Heart left ventricle (tissue), 16 donors: ENCODE measurements at regions of chr5 and their contacts with region 1.

Region 1: GRCh38 chr5:172697123-172698121 is 56.4 kb downstream of the NEURL1B start:
- DNase-seq: peak; percentile 91 to 94 (median 92)
- ATAC-seq: peak; percentile 63 to 78 (median 68)
- H3K4me3 ChIP-seq: peak overlapping the region; percentile 21 to 70 (median 62)
- H3K27ac ChIP-seq: peak overlapping the region; percentile 53 to 94 (median 89)
- H3K4me1 ChIP-seq: peaks cover 5 to 74% (median 65%) of the 10 kb centered on the region in 12 donors
- H3K27me3 ChIP-seq: no peaks in the 10 kb centered on the region
- CTCF ChIP-seq: peak; percentile 80 to 96 (median 92)
- POLR2A ChIP-seq: peak in 1 of 2 donors; percentile 49

Region 2: DNA sequence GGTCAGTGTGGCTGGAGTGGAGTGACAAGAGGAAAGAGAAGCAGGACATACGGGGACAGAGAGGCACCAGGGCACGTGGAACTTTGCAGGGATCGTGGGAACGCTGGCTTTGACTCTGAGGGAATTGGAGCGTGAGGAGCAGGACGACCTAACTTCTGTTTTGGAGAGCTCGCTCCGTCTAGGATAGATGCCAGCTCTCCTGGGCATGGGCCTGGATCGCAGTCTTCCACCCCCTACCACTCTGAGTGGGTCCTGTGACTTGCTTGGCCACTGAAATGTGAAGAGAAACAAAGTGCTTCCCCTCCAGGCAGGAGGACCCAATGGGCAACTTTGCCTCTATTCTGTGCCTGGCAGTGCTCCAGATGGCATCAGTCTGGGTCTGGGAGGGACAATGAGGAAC is 234.4 kb before region 1 on chr5:
- intact Hi-C with region 1: loop called in 2 of 10 experiments (anchors 5 kb)
- DNase-seq: no peak
- ATAC-seq: no peak
- H3K4me3 ChIP-seq: no peak overlapping the region
- H3K27ac ChIP-seq: no peak overlapping the region
- H3K4me1 ChIP-seq: peaks cover 0 to 35% (median 3%) of the 10 kb centered on the region in 12 donors
- H3K27me3 ChIP-seq: no peaks in the 10 kb centered on the region
- CTCF ChIP-seq: no peak
- POLR2A ChIP-seq: no peak

Region 3: DNA sequence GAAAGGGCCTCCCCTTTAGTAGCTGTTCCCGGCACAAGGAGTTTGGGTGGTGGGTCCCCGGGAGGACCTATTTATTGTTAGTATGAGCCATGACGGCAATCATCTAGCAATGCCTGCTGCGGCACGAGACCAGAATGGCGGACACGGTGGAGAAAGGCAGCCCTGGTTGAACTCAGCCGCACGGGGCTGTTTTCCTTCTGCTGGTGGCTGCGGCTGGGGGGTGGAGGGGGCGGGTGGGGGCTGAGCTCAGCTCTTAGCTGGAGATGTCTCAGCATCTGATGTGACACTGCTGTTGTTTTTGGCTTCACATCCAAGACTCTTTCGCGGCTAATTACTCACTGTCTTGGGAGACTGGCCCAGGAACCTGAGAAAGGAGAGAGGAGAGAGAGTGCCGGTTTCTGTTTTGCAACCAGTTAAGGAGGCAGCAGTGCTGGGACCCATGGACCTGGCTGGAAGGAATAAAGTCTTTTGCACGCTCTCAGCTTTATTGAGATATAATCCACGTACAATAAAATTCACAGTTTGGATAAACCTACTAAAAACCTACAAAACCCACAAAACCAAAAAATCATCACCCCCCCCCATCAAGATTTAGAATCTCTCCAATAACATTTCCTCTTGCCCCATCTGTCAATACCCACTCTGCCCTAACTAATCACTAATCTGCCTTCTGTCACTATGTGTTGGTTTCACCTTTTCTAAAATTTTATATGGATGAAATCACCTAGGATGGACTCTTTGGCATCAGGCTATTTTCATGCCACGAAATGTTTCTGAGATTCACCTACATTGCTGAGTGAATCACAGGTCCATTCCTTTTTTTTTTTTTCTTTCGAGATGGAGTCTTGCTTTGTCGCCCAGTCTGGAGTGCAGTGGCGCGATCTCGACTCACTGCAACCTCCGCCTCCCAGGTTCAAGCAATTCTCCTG is 138.2 kb before region 1 on chr5:
- intact Hi-C with region 1: loop called in 1 of 10 experiments (anchors 5 kb)
- DNase-seq: peak; percentile 43 to 80 (median 66)
- ATAC-seq: peak; percentile 13 to 75 (median 63)
- H3K4me3 ChIP-seq: peak overlapping the region in 10 of 12 donors; percentile 5 to 50 (median 24)
- H3K27ac ChIP-seq: peak overlapping the region in 11 of 12 donors; percentile 68 to 90 (median 78)
- H3K4me1 ChIP-seq: peaks cover 10 to 46% (median 34%) of the 10 kb centered on the region in 12 donors
- H3K27me3 ChIP-seq: no peaks in the 10 kb centered on the region
- CTCF ChIP-seq: no peak
- POLR2A ChIP-seq: no peak

Region 4: DNA sequence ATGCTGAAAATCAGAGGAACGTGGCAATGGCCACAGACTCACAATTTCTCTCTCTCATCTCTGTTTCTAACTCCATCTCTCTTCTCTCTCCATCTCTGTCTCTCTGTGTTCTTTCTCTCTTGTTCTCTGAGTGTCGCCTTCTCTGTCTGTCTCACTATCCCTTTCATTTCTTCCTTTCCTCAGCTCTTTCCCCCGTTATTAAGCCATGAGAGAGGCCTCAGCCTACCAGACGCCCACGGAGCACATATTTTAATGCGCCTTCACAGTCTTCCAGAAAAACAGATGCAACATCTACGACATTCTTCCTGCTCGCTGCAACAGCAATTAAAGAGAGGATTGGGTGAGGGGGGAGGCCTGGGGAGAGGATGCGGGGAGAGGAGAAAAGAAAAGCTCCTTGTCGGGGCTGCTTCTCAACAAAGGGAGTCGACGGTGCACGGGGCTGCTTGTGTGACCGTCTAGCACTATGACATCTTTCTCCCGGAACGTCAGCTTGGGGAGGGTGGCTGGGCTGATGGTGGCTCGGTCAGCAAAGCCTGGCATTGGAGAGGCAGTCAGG is 94.1 kb before region 1 on chr5:
- intact Hi-C with region 1: loop called in 2 of 10 experiments (anchors 5 to 10 kb)
- DNase-seq: peak in 3 of 5 donors; percentile 59 to 68 (median 68)
- ATAC-seq: peak in 3 of 4 donors; percentile 17 to 68 (median 55)
- H3K4me3 ChIP-seq: peak overlapping the region in 5 of 12 donors; percentile 14 to 29 (median 17)
- H3K27ac ChIP-seq: peak overlapping the region; percentile 76 to 94 (median 83)
- H3K4me1 ChIP-seq: peaks cover 0 to 69% (median 37%) of the 10 kb centered on the region in 12 donors
- H3K27me3 ChIP-seq: no peaks in the 10 kb centered on the region
- CTCF ChIP-seq: no peak
- POLR2A ChIP-seq: no peak

Region 5: DNA sequence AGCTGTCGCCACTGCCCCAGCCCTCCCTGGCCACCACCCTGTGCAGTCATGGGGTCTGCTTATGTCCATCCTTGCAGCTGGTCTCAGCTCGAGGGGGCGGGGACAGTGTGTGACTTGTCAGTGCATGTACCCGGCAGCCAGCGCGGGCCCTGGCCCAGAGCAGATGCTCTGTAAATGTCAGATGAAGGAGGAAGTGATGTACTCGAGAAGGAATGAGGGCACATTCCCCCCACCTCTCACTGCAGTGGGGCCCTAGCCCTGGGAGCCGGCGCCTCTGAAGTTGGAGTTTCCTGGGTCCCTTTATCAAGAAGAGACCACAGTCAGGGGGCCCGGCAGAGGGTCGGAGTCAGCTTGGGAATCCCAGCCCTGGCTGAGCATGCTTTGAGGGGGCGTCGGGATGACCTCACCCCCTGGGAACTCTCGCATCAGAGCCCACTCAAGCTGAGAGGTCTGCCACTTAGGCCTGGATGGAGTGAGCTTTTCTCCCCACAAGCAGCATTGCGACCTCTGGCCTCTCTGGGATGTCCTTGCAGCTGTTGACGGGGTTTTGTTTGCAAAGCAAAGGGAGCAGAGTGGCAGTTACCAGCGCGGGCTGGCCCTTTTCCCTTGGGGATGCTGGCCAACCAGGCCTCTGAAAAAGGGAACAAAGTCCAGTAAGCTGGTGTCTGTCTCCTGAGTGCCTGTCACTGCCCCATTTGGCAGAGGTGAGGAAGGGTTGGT is 37.4 kb before region 1 on chr5:
- intact Hi-C with region 1: loop called in 4 of 10 experiments (anchors 2 to 5 kb)
- DNase-seq: peak; percentile 90 to 98 (median 94)
- ATAC-seq: peak; percentile 91 to 93 (median 92)
- H3K4me3 ChIP-seq: peak overlapping the region in 4 of 12 donors; percentile 0 to 27 (median 12)
- H3K27ac ChIP-seq: peak overlapping the region; percentile 75 to 98 (median 89)
- H3K4me1 ChIP-seq: peaks cover 19 to 93% (median 76%) of the 10 kb centered on the region in 12 donors
- H3K27me3 ChIP-seq: no peaks in the 10 kb centered on the region
- CTCF ChIP-seq: peak in 2 of 12 donors; percentile 22 to 33
- POLR2A ChIP-seq: no peak

Region 6: DNA sequence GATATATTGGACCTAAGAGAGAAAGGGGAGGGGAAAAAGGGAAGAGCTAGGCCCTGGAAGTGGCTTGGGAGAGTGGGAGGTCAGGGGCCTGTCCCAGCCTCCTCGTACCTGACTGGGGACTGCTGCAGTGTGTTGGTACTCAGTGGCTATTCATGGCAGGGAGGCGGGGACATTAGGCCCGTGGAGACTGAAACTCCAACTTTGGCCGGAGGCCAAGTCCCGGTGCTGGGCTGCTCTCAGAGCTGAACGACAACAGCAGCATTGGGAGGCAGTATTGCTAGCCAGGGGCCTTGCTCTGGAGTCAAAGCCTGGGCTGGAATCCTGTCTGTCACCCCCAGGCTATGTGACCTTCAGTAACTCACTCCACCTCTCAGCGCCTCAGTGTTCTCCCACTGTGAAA is 18.5 kb before region 1 on chr5:
- intact Hi-C with region 1: no loop called
- DNase-seq: peak; percentile 89 to 92 (median 91)
- ATAC-seq: peak; percentile 80 to 92 (median 90)
- H3K4me3 ChIP-seq: no peak overlapping the region
- H3K27ac ChIP-seq: peak overlapping the region in 10 of 12 donors; percentile 34 to 74 (median 56)
- H3K4me1 ChIP-seq: peaks cover 0 to 74% (median 45%) of the 10 kb centered on the region in 12 donors
- H3K27me3 ChIP-seq: no peaks in the 10 kb centered on the region
- CTCF ChIP-seq: no peak
- POLR2A ChIP-seq: no peak